Calu3 (cell line): ENCODE measurements at regions of chr14 and their contacts with region 1.

Region 1: GRCh38 chr14:55102141-55102621 is 26.9 kb upstream of the LGALS3 start:
- DNase-seq: peak; percentile 89
- H3K4me3 Mint-ChIP-seq: peak overlapping the region; percentile 89
- H3K27ac Mint-ChIP-seq: peak overlapping the region; percentile 100
- H3K4me1 Mint-ChIP-seq: peaks cover 54% of the 10 kb centered on the region
- H3K27me3 Mint-ChIP-seq: no peaks in the 10 kb centered on the region
- CTCF ChIP-seq: no peak

Region 2: GRCh38 chr14:55077155-55077554 is 25.0 kb before region 1 on chr14:
- CTCF ChIA-PET with region 1: interaction called, 5 read pairs
- intact Hi-C with region 1: loop called (anchors 2 kb)
- DNase-seq: peak; percentile 73
- H3K4me3 Mint-ChIP-seq: peak overlapping the region; percentile 53
- H3K27ac Mint-ChIP-seq: peak overlapping the region; percentile 96
- H3K4me1 Mint-ChIP-seq: peaks cover 30% of the 10 kb centered on the region
- H3K27me3 Mint-ChIP-seq: no peaks in the 10 kb centered on the region
- CTCF ChIP-seq: no peak

Region 3: DNA sequence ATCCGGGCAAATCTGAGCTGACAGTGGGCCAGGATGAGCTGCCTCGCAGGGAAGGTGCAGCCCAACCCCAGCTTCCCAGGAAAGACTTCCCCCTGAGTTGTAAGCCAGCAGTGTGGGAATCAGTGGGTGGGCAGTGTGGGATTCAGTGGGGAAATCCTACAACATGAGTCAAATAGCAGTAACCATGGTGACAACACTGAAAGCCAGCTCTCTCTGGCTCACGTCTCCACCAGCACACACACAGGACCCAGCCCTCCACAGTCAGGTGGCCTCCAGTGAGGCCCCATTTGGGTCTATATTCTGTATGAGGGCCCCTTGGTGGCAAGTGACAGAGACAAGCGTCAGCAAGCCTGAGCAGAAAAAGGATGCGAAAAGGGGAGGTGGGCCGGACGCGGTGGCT is 20.9 kb after region 1 on chr14:
- CTCF ChIA-PET with region 1: interaction called, 22 read pairs
- intact Hi-C with region 1: loop called (anchors 1 kb)
- DNase-seq: no peak
- H3K4me3 Mint-ChIP-seq: peak overlapping the region; percentile 55
- H3K27ac Mint-ChIP-seq: peak overlapping the region; percentile 97
- H3K4me1 Mint-ChIP-seq: peaks cover 76% of the 10 kb centered on the region
- H3K27me3 Mint-ChIP-seq: no peaks in the 10 kb centered on the region
- CTCF ChIP-seq: no peak

Region 4: GRCh38 chr14:55129428-55130195 is 27.4 kb after region 1 on chr14:
- CTCF ChIA-PET with region 1: interaction called, 22 read pairs
- intact Hi-C with region 1: loop called (anchors 1 kb)
- DNase-seq: peak; percentile 58
- H3K4me3 Mint-ChIP-seq: peak overlapping the region; percentile 80
- H3K27ac Mint-ChIP-seq: peak overlapping the region; percentile 83
- H3K4me1 Mint-ChIP-seq: peaks cover 37% of the 10 kb centered on the region
- H3K27me3 Mint-ChIP-seq: no peaks in the 10 kb centered on the region
- CTCF ChIP-seq: no peak